PC-9 (cell line): ENCODE measurements at regions of chr18 and their contacts with region 1.

Region 1: DNA sequence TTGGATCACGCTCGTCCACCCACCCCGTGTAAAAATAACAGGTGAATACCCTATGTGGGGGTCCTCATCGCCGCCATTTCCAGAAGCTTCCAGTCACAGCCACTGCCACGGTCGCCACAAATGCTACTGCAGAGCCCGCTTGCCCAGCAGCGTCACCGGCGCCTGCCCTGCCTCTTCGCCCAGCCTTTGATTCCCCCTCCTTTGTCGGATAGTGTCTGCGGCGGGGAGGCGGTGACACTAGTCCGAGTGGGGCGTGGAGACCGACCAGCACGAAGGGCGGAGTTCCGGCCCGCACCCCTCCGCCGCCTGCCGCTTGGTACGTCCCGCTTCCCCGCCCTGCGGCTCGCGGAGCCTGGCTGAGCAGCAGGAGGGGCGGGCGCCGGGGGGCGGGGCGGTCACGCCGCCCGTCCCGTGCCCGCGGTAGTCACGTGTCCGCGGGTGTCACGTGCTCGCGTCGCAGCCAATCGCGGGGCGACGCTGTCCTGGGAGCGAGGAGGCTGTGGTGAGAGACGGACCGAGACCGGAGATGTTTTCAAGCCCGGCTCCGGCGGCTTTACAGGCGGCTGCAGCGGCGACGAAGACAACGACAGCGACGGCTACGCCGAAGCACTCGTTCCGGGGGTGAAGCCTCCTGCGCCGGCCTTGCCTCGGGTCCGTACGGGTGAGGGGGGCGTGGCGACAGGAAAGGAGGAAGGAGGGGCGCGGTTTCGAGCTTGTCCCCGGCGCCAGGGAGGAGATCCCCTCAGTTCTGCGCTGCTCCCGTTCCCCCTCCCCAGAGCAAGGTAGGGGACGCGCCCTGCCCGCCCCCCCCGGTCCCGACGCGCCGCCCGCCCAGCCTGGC is at the start of gene ANKRD12:
- DNase-seq: peak; percentile 85 to 100
- H3K4me3 ChIP-seq: peak within 1 kb of the TSS; percentile 80
- H3K27ac ChIP-seq: peak within 1 kb of the TSS; percentile 90
- H3K4me1 ChIP-seq: peaks cover 65% of the 10 kb centered on the region
- H3K27me3 ChIP-seq: no peaks in the 10 kb centered on the region
- CTCF ChIP-seq: no peak
- total RNA-seq, gene ANKRD12: 26.9 and 31.6 TPM in 2 replicates

Region 2: DNA sequence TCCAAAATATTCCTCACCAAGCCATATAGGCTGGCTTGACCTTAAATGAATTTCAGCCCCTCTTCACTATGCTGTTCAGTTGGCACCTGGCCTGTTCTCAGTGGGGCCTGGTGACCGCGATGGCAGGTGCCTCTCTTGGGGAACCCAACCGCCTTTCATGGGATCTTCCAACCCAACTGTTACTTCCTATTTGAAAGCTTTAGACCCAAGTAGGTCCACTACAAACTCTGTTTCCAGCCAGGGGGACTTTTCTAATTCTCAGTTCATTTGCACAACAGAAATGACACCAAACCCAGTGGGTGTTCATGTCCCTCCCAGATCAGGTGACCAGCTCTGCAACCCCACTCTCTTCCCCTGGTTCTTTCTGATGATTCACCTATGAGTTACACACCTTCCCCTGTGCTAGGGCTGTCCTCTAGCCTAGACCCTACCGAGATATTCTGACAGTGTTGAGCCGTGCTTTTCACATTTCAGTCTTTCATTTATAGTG is 69.7 kb before region 1 on chr18:
- CTCF ChIA-PET with region 1: no interaction called
- POLR2A ChIA-PET with region 1: interaction called, 13 read pairs
- intact Hi-C with region 1: no loop called
- DNase-seq: no peak
- H3K4me3 ChIP-seq: no peak overlapping the region
- H3K27ac ChIP-seq: no peak overlapping the region
- H3K4me1 ChIP-seq: peaks cover 40% of the 10 kb centered on the region
- H3K27me3 ChIP-seq: no peaks in the 10 kb centered on the region
- CTCF ChIP-seq: no peak

Region 3: DNA sequence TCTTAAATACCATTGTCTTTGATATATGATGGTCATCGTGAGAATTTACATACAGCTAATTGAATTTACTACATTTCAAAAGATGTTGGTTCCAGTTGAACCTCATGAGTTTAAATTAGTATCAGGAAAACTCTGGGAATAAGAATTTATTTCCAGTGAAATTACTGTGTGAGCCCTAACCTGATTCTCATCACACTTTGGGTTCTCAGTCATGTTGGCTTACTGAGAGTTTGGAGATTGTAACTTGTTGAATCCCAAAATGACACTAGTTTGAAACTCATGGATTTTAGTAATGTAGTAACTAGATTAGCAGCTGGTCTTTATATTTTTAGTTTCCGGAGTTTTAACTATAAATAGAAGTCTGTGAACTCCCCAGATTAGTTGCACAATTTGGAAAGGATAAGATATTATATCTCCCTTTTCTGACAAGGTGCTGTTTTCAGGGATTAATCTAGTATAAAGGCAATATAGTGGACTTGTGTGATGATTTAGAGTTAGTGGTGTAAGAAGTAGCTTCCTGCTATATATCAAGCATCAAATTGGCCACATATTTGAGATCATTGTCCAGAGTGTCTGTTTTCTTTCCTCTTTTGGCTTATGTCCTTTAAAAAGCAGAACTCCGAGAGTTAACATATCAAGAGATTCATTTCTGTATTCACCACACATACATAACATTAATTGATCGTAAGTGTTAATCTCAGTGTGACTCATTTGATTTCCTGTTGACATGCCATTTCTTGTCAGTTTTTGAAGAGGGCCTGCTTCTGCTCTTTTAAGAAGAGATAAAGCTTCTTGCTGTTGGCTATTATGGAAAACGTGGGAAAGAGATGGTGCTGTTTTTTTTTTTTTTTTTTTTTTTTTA is 18.3 kb before region 1 on chr18:
- CTCF ChIA-PET with region 1: interaction called, 3 read pairs
- POLR2A ChIA-PET with region 1: interaction called, 6 read pairs
- intact Hi-C with region 1: loop called (anchors 1 kb)
- DNase-seq: no peak
- H3K4me3 ChIP-seq: no peak overlapping the region
- H3K27ac ChIP-seq: peak overlapping the region; percentile 85; the same call in 1 of the 2 replicates
- H3K4me1 ChIP-seq: peaks cover 29% of the 10 kb centered on the region
- H3K27me3 ChIP-seq: no peaks in the 10 kb centered on the region
- CTCF ChIP-seq: no peak

Region 4: DNA sequence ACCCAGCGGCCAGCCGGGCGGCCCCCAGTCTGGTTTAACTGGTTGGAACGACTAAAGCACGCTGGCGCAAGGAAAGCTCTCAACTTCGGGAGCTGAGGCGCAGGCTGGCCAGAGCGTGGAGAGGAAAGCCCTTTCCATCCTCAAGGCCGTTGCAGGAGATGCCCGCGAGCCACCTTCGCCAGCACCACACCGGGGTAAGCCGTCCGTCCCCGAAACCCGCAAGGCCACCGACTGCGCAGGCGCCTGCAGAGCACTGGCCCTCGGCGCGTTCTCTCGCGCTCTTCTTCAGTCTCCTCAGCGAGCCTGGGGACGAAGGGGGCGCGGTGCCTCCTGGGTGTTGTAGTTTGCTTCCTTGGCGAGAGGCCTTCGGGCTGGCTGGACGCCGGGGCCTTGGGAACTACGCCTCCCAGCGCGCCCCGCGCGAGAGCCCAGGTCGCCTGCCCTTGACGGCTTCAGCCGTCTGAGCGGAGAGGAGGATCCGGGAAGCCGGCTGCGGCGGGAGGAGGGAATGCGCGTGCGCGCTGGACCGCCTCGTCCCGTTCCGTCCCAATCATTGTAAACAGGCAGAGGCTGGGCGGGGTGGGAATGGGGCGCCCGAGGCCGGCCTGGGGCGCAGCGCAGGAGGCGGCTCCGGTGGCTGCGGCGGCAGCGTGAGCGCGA is 338.6 kb after region 1 on chr18 and contains the start of gene RALBP1:
- CTCF ChIA-PET with region 1: no interaction called
- POLR2A ChIA-PET with region 1: no interaction called
- intact Hi-C with region 1: loop called (anchors 2 kb)
- DNase-seq: peak; percentile 96 to 100
- H3K4me3 ChIP-seq: peak within 1 kb of the TSS; percentile 68
- H3K27ac ChIP-seq: peak within 1 kb of the TSS; percentile 94
- H3K4me1 ChIP-seq: peaks cover 23% of the 10 kb centered on the region
- H3K27me3 ChIP-seq: no peaks in the 10 kb centered on the region
- CTCF ChIP-seq: no peak; the same call in 1 of the 2 replicates
- total RNA-seq, gene RALBP1: 91.3 and 95.0 TPM in 2 replicates

Region 5: GRCh38 chr18:9673296-9674251 is 537.0 kb after region 1 on chr18:
- CTCF ChIA-PET with region 1: no interaction called
- POLR2A ChIA-PET with region 1: interaction called, 18 read pairs
- intact Hi-C with region 1: no loop called
- DNase-seq: peak; percentile 84 to 100
- H3K4me3 ChIP-seq: peak overlapping the region; percentile 36; the same call in 1 of the 2 replicates
- H3K27ac ChIP-seq: peak overlapping the region; percentile 92
- H3K4me1 ChIP-seq: peaks cover 34% of the 10 kb centered on the region
- H3K27me3 ChIP-seq: no peaks in the 10 kb centered on the region
- CTCF ChIP-seq: peak; percentile 61

Region 6: GRCh38 chr18:10525371-10526210 is 1389.1 kb after region 1 on chr18 and contains the start of gene NAPG:
- CTCF ChIA-PET with region 1: no interaction called
- POLR2A ChIA-PET with region 1: interaction called, 16 read pairs
- intact Hi-C with region 1: no loop called
- DNase-seq: peak; percentile 83 to 93
- H3K4me3 ChIP-seq: peak within 1 kb of the TSS; percentile 98
- H3K27ac ChIP-seq: peak within 1 kb of the TSS; percentile 76
- H3K4me1 ChIP-seq: peaks cover 27% of the 10 kb centered on the region
- H3K27me3 ChIP-seq: no peaks in the 10 kb centered on the region
- CTCF ChIP-seq: no peak
- total RNA-seq, gene NAPG: 28.1 and 31.0 TPM in 2 replicates